ENCODE measurements at regions of chr10 and their contacts with region 1.

Region 1: DNA sequence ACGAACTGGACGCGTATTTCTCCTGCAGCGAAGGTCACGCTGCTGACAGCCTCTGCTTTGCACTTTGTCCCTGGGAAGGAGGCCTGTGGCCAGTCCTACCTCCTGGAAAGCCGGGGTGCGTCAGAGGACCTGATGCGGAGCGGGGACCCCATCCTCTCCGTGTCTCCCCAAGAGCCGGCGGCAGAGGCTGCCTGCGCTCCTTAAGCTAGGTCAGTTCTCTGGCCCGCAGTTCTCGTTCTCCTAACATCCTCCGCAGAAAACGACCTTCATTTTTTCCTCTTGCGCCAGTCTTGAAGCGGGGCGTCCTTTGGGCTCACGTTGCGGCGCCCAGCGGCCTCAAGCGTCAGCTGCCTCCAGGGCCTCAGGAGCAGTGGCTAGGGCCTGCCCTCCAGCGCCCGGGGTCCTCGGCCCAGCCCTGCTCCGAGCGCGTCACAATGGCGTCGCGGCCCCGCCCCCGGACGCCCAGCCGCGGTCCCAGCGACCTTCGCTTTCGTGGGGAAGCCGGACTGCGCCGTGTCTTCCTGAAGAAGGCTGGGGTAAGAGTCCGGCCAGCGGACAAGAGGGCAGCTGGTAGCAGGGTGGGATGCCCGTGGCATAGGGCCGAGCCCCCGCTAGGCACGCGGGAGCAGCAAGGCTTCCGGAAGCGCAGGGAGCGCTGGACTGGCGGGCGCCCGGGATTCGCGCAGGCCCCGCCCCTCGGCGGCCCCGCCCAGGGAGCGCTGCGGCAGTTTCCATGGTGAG is at the start of gene ZNF487:
- DNase-seq: peak; percentile 79
- ATAC-seq: peak; percentile 99
- H3K4me3 ChIP-seq: peak within 1 kb of the TSS; percentile 98
- H3K27ac ChIP-seq: peak within 1 kb of the TSS; percentile 99
- H3K4me1 ChIP-seq: no peaks in the 10 kb centered on the region
- H3K27me3 ChIP-seq: no peaks in the 10 kb centered on the region
- CTCF ChIP-seq: peak; percentile 37
- POLR2A ChIP-seq: peak; percentile 96
- RAD21 ChIP-seq: peak; percentile 32
- total RNA-seq, gene ZNF487: 2.5 and 2.7 TPM in 2 replicates

Region 2: DNA sequence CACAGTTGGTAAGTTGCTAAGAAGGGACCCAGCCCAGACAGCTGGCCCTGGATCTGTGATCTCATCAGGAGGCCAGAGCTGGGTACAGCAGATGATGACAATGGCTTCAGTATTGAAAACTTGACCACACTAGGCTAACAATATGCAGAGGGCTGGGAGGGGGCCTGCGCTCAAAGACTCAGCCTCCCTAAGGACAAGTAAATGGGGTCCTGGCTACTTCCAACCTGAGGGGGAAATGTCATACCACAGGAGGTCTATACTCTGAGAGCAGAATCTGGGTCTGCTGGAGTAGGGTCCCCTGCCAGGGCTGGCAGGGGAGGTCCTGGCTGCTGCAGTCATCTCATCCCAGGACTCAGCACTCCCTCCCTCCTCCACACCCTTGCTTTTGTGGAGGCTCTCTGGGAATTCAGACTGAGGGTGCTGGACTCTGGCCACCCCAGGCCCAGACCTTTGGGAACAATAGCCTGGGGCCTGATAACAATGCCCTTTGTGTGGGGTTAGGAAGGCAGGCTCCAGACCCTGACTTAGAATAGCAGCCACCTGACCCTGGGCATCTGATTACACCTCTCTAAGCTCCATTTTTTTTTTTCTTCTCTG is 63.7 kb before region 1 on chr10:
- CTCF ChIA-PET with region 1: no interaction called
- POLR2A ChIA-PET with region 1: no interaction called
- dilution Hi-C with region 1: no loop called
- in situ Hi-C with region 1: no loop called
- intact Hi-C with region 1: no loop called
- DNase-seq: no peak
- ATAC-seq: no peak
- H3K4me3 ChIP-seq: no peak overlapping the region
- H3K27ac ChIP-seq: no peak overlapping the region
- H3K4me1 ChIP-seq: no peaks in the 10 kb centered on the region
- H3K27me3 ChIP-seq: peaks cover 15% of the 10 kb centered on the region
- CTCF ChIP-seq: no peak
- POLR2A ChIP-seq: no peak
- RAD21 ChIP-seq: no peak

Region 3: DNA sequence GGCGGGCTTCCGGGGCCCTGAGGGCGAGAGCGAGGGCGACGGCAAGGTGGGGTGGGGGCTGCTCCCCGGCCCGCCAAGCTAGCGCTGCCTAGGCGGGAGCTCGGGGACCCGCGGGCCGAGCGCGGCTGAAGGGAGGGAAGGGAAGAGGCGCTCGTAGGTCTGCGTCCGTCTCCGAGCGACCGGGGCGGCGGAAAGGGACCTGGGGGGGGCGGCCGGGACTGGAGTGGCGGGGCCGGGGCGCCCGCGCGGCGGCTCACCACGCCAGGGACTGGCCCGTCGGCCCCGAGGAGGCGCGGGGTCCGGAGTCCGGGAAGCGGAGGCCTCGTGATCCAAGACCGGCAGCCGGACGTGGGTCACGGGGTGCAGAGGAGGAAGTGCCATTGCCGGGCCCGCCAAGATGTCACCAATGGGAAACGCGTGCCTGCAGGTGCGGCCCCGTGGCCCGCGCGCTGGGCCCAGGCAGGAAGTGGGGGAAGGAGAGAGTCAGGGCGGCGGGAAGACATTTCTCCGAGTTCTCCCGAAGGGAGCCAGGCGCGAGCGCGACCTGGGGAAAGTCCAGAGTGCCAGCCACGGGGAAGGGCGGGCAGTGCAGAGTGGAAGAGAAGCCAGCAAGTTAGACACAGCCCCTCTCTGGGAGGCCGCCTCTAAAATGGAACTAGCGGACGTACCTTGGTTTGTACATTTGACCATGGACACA is 39.5 kb before region 1 on chr10:
- CTCF ChIA-PET with region 1: no interaction called
- POLR2A ChIA-PET with region 1: no interaction called
- dilution Hi-C with region 1: no loop called
- in situ Hi-C with region 1: no loop called
- intact Hi-C with region 1: loop called (anchors 2 kb)
- DNase-seq: peak; percentile 72
- ATAC-seq: peak; percentile 49
- H3K4me3 ChIP-seq: peak overlapping the region; percentile 88
- H3K27ac ChIP-seq: peak overlapping the region; percentile 85
- H3K4me1 ChIP-seq: peaks cover 15% of the 10 kb centered on the region
- H3K27me3 ChIP-seq: no peaks in the 10 kb centered on the region
- CTCF ChIP-seq: no peak
- POLR2A ChIP-seq: peak; percentile 61
- RAD21 ChIP-seq: no peak

Region 4: DNA sequence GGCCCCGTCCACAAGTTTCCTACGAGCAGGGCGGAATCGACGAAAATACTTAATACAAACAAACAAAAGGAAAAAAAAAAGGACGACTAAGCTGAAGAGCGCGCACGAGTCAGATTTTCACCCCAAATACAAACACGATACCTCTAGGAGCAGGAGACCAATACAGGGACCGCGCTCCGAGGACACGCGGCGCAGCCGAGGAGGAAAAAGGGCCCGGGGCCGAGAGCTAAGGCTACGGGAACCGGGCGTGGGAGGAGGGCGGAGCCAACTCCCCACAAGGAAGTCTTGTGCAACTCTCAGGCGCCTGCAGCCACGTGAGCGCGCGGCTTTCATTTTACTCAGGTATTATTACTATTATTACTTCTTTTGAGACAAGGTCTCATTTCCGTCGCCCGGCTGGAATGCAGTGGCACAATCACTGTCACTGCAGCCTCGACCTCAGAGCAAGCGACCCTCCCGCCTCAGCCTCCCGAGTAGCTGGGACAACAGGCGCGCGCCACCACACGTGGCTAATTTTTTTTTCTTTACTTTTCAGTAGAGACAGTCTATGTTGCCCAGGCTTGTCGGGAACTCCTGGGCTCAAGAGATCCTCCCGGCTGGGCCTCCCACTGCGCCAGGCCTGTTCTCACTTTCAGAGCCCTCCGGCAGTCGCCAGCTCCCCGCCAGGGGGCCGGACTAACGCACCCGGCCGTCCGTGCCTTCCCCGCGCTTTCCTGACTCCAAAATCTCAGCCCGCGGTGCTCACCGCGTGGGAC is 28.8 kb before region 1 on chr10:
- CTCF ChIA-PET with region 1: no interaction called
- POLR2A ChIA-PET with region 1: no interaction called
- dilution Hi-C with region 1: no loop called
- in situ Hi-C with region 1: no loop called
- intact Hi-C with region 1: loop called (anchors 1 kb)
- DNase-seq: peak; percentile 89
- ATAC-seq: peak; percentile 36
- H3K4me3 ChIP-seq: peak overlapping the region; percentile 82
- H3K27ac ChIP-seq: peak overlapping the region; percentile 96
- H3K4me1 ChIP-seq: peaks cover 2% of the 10 kb centered on the region; the same call in 1 of the 2 replicates
- H3K27me3 ChIP-seq: no peaks in the 10 kb centered on the region
- CTCF ChIP-seq: peak; percentile 43
- POLR2A ChIP-seq: peak; percentile 94
- RAD21 ChIP-seq: no peak

Region 5: DNA sequence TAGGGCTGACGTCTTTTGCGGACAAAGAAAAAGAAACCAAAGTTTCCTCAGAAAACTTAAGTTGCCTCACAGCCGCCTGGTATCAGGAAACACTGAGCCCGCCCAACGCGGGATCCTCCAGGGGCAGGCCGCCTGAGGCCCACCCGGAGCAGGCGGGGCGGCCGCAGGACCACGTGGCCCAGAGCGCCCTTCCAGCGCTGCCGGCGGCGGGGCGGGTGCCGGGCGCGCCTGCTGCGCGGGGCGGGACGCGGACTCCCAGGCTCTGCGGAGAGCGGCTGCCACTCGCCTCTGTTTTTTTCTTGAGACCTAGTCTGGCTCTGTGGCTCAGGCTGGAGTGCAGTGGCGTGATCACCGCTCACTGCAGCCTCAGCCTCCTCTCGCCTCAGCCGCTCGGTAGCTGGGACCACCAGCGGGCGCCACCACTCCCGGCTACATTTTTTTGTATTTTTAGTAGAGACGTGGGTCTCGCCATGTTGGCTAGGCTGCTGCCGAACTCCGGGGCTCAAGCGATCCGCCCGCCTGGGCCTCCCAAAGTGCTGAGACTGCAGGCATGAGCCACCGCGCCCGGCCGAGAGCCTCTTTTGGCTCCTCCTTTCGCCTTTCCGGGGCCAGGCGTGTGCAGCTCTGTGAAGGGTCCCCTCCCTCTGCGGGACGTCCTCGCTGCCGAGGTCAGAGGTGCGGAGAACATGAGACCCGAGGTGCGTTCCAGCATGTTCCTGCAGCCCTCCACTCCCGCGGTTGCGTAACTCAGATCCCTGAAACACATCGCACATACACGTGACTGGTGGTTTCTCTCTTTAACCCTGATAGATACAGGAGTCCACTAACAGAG is 16.0 kb before region 1 on chr10:
- CTCF ChIA-PET with region 1: interaction called, 3 read pairs
- POLR2A ChIA-PET with region 1: interaction called, 3 read pairs
- dilution Hi-C with region 1: no loop called
- in situ Hi-C with region 1: no loop called
- intact Hi-C with region 1: loop called (anchors 1 kb)
- DNase-seq: peak; percentile 78
- ATAC-seq: peak; percentile 98
- H3K4me3 ChIP-seq: peak overlapping the region; percentile 46
- H3K27ac ChIP-seq: peak overlapping the region; percentile 97
- H3K4me1 ChIP-seq: 0 out of 2 replicates have a peak, but pooled peaks cover 2% of the 10 kb centered on the region
- H3K27me3 ChIP-seq: no peaks in the 10 kb centered on the region
- CTCF ChIP-seq: peak; percentile 26; the same call in 1 of the 2 replicates
- POLR2A ChIP-seq: peak; percentile 50; the same call in 1 of the 2 replicates
- RAD21 ChIP-seq: no peak